ENCODE measurements at regions of chr3 and their contacts with region 1.

Region 1: DNA sequence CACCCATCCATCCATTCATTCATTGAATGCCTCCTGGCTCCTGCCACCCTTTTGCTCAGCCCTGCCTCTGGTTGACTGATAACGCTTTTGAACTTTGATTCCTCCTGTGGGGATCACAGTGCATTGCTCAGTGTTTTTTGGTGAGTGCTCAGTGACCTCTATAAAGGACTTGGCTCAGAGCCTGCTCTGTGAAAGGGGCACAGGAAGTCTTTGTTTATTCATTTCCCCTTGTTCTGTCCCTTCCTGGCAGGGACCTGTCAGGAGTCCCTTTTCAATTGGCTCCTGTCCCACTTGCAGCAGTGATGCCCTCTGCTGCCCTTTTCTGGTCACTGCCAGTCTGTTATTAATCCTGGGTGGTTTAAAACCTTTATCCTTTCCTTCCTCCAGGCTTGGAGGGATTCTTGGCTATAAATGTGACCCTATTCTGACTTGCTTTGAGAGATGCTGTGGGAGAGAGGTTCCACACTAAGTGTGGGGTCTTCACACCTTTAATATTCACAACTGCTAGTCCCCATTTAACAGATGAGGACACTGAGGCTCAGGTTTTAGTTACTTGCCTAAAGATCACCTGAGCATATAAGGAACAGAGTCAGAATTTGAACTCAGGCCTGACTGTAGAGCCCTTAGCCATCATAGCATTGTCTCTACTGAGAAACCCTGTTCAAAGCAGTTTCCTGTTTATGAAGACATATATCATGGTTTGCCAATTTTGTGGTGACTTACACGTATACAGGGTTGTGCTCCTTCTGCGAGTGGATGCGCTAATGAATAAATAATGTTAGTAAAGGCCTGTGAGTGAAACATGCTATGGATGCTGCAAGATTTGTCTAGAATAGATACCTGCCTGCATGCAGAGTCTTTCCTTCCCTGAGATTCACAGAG is 23.2 kb upstream of the TATDN2 start:
- H3K4me3 Mint-ChIP-seq: no peak overlapping the region
- H3K27ac Mint-ChIP-seq: peak overlapping the region; percentile 71
- H3K4me1 Mint-ChIP-seq: peaks cover 48% of the 10 kb centered on the region
- H3K27me3 Mint-ChIP-seq: no peaks in the 10 kb centered on the region

Region 2: GRCh38 chr3:10142707-10143566 is 82.1 kb before region 1 on chr3:
- intact Hi-C with region 1: loop called (anchors 5 kb)
- H3K4me3 Mint-ChIP-seq: peak overlapping the region; percentile 80
- H3K27ac Mint-ChIP-seq: peak overlapping the region; percentile 99
- H3K4me1 Mint-ChIP-seq: peaks cover 19% of the 10 kb centered on the region
- H3K27me3 Mint-ChIP-seq: no peaks in the 10 kb centered on the region

Region 3: DNA sequence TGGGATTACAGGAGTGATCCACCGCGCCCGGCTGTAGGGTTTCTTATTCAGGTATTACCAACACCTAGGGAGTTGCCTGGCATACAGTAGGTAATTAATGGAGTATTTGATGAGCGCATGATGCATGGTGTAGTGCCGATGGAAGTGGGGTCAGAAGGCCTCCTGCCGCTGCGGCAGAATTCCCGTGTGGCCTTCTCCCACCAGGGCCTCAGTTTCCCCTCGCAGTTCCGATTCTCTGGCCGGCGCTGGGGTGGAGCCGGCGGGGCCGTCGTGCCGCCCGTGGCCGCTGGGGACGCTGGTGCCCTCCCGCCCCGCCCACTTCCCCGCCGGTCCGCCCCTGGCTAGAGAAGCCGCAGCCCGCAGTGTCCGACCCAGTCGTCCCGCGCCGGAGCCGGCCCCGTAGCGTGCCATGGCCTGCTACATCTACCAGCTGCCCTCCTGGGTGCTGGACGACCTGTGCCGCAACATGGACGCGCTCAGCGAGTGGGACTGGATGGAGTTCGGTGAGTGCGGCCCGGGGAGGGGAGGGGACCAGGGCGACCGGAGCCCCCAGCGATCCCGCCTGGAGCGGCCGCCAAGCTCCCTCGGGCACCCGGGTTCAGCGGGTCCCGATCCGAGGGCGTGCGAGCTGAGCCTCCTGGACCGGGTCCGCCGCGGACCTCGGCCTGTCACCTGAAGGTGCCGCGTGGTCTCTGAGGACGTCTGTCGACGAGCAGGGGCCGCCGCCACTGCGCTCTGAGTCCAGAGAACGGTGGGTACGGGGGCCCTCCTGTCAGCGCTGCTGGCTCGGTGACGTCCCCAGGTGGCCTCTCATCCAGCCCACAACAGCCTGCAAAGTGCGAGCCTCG is 60.3 kb before region 1 on chr3 and contains the start of gene IRAK2:
- intact Hi-C with region 1: loop called (anchors 2 kb)
- H3K4me3 Mint-ChIP-seq: peak within 1 kb of the TSS; percentile 85
- H3K27ac Mint-ChIP-seq: peak within 1 kb of the TSS; percentile 80
- H3K4me1 Mint-ChIP-seq: peaks cover 20% of the 10 kb centered on the region
- H3K27me3 Mint-ChIP-seq: no peaks in the 10 kb centered on the region